ENCODE measurements at regions of chr7 and their contacts with region 1.

Region 1: GRCh38 chr7:22559829-22560489 is 60.0 kb upstream of the STEAP1B start:
- DNase-seq: no peak
- H3K4me3 ChIP-seq: no peak overlapping the region
- H3K27ac ChIP-seq: no peak overlapping the region
- H3K4me1 ChIP-seq: peaks cover 29 to 53% (median 46%) of the 10 kb centered on the region in 6 donors
- H3K27me3 ChIP-seq: peaks cover 0 to 23% (median 0%) of the 10 kb centered on the region in 7 donors
- CTCF ChIP-seq: peak; percentile 78 to 98 (median 84)
- POLR2A ChIP-seq: no peak

Region 2: DNA sequence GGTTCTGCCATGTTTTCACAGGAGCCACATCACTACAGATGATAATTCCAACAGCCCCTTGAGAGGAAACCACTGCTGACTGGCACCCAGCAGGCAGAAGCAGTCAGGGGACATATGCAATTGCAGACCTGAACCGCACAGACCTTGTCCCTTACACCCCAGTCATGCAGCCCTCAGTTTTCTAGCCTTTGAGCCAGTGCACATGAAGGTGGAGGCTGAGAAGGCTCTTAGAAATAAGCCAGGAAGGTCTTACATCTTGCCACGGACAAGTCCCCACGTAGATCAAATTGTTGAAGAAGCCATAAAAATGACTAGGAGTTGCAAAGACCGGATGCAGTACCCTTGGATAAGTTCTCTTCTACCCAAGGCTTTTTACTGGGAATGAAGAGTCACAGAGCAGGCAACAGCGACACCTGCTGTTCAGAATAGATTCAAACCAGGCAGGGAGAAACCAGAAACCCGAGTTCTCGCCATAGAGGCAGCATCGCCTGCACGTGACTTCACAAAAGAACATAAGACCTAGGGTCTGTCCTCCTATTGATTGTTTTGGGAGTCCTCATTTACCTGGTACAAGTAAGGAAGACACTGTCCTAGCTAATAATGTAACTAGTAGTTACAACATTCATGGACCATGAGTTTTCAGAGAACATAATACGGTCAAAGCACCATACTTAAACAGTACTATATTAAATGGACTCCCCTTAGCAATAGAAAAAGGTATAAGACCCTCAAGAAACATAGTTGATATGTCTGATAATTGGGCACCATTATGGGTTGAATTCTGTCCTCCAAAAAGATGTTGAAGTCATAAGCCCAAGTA is 71.1 kb before region 1 on chr7:
- intact Hi-C with region 1: no loop called
- DNase-seq: no peak
- H3K4me3 ChIP-seq: no peak overlapping the region
- H3K27ac ChIP-seq: peak overlapping the region in 5 of 8 donors; percentile 26 to 58 (median 53)
- H3K4me1 ChIP-seq: peaks cover 0 to 9% (median 4%) of the 10 kb centered on the region in 6 donors
- H3K27me3 ChIP-seq: peaks cover 0 to 4% (median 0%) of the 10 kb centered on the region in 7 donors
- CTCF ChIP-seq: peak; percentile 54 to 94 (median 88)
- POLR2A ChIP-seq: no peak

Region 3: GRCh38 chr7:22607180-22607579 is 47.2 kb after region 1 on chr7:
- intact Hi-C with region 1: no loop called
- DNase-seq: no peak
- H3K4me3 ChIP-seq: no peak overlapping the region
- H3K27ac ChIP-seq: no peak overlapping the region
- H3K4me1 ChIP-seq: peaks cover 0 to 1% (median 0%) of the 10 kb centered on the region in 6 donors
- H3K27me3 ChIP-seq: no peaks in the 10 kb centered on the region
- CTCF ChIP-seq: no peak
- POLR2A ChIP-seq: no peak

Region 4: DNA sequence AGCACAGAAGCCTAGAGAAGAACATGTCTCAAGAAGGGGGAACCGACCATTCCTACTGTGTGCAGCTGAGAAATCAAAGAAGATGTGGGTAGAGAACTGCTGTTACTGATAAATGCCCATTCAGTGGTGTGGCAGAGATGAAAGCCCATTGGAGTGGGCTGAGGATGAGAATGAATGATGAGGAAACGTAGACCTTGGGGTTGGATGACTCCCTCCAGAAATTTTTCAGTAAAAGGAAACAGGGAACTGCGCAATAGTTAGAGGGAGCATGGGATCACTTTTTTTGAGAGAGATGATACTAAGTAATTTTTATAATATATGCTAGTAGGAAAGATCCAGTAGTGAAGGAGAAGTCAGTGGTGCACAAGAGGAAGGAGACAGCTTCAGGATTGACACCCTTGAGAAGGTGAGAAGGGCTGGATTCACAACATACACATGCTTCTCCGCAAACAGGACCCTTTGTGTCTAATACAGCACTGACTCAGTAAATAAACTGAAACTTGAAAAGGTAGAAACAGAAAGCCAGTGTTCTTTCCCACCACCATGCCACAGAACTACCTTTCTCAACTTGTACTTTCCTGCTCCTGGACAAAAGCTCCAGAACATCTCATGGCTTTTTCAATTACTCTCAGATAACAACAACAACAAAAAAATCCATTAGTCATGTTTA is 62.3 kb after region 1 on chr7:
- intact Hi-C with region 1: no loop called
- DNase-seq: no peak
- H3K4me3 ChIP-seq: no peak overlapping the region
- H3K27ac ChIP-seq: no peak overlapping the region
- H3K4me1 ChIP-seq: no peaks in the 10 kb centered on the region
- H3K27me3 ChIP-seq: no peaks in the 10 kb centered on the region
- CTCF ChIP-seq: no peak
- POLR2A ChIP-seq: no peak

Region 5: GRCh38 chr7:22726345-22727185 is 166.6 kb after region 1 on chr7:
- intact Hi-C with region 1: loop called (anchors 5 kb)
- DNase-seq: peak; percentile 84
- H3K4me3 ChIP-seq: peak overlapping the region; percentile 26 to 61 (median 36)
- H3K27ac ChIP-seq: peak overlapping the region; percentile 11 to 89 (median 76)
- H3K4me1 ChIP-seq: peaks cover 32 to 98% (median 68%) of the 10 kb centered on the region in 6 donors
- H3K27me3 ChIP-seq: peaks cover 0 to 25% (median 3%) of the 10 kb centered on the region in 7 donors
- CTCF ChIP-seq: peak in 10 of 11 experiments; percentile 39 to 72 (median 58)
- POLR2A ChIP-seq: peak in 1 of 3 donors; percentile 7

Region 6: DNA sequence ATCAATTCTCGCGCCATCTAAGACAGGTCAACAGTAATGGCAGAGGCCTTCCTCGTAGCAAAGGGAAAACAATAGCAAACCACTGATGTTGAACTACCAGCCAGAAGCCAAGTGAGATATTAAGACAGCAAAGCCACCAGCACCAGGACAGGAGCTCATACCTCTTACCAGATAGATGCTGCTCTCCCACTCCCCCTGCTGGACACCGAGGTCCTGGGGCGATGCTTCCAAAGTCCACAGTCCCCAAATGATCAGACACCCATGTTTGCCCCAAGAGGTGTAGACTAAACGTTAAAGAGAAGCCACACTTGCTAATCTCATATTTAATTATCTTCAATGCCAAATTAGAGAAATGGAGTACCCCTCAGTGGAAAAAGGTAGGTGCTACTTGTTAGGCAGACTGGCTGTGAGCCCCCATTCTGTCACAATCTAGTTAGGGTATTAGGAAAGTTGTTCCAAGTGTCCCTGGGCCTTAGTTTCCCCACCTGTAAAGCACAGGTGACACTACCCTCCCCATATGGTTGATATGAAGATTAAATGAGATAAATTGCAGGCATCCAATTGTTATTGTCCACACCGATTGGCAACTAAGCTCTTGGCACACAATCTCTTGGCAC is 222.8 kb after region 1 on chr7:
- intact Hi-C with region 1: loop called (anchors 2 kb)
- DNase-seq: peak; percentile 87
- H3K4me3 ChIP-seq: no peak overlapping the region
- H3K27ac ChIP-seq: no peak overlapping the region
- H3K4me1 ChIP-seq: peaks cover 0 to 3% (median 0%) of the 10 kb centered on the region in 6 donors
- H3K27me3 ChIP-seq: no peaks in the 10 kb centered on the region
- CTCF ChIP-seq: peak; percentile 20 to 85 (median 79)
- POLR2A ChIP-seq: no peak

Region 7: DNA sequence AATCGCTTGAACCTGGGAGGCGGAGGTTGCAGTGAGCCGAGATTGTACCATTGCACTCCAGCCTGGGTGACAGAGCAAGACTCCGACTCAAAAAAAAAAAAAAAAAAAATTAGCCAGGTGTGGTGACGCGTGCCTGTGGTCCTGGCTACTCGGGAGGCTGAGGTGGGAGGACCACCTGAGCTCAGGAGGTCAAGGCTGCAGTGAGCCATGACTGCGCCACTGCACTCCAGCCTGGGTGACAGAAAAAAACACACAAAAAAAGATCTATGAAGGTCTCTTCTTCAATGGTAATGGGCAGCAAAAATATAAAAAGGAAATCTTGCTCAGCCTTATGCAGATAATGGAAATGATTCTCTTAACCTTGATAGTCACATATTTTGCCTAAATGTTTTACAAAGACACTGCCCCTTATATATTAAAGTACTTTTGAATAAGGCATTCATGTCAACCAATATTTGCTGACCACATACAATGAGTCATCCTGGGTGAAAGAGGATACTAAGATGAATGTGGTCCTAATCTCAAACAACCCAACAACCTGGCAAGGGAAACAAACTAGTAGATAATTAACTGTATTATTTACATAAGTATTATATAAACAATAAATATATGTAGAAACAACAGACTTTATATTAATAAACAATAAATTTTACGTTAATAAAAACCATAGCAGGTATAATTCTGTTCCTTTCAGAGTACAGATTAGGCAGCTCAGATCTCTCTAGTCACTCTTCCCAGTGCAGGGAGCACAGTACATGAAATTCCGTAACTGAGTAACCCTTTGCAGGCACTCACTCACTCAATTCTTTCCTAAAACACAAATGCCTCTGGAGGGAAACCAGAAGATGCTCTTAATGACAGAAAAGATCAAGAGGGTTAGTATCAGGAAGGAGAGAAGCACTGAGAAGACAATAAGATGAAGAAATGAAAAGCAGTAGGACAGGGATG is 254.6 kb after region 1 on chr7:
- intact Hi-C with region 1: no loop called
- DNase-seq: no peak
- H3K4me3 ChIP-seq: no peak overlapping the region
- H3K27ac ChIP-seq: no peak overlapping the region
- H3K4me1 ChIP-seq: peaks cover 0 to 47% (median 10%) of the 10 kb centered on the region in 6 donors
- H3K27me3 ChIP-seq: no peaks in the 10 kb centered on the region
- CTCF ChIP-seq: no peak
- POLR2A ChIP-seq: no peak

Region 8: DNA sequence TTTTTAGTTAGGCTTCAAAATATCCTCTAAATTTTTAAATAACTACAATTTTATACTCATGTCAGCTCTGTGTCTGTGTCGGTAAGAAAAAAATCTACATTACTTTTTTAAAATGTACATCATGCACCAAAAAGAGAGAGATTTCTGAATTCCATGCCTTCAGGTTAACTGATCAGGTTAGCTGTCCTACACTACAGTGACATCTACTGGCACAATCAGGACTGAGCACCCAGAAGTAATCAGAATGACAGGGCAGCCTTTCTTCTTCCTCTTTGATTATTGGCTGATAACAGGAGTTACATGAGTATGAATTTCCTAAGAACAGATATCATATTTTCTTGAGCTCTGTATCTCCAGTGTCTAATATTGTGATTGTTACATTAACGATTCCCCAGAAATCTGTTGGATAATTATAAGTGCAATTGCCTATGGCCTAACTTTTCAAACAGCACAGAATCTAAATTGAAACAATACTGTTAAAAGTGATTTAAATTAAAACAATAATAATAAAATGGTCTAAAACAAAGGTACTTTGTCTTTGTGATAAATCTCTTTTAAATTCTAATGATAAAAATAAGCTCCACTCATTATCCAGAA is 495.7 kb after region 1 on chr7:
- intact Hi-C with region 1: loop called (anchors 10 kb)
- DNase-seq: no peak
- H3K4me3 ChIP-seq: no peak overlapping the region
- H3K27ac ChIP-seq: no peak overlapping the region
- H3K4me1 ChIP-seq: peaks cover 0 to 10% (median 0%) of the 10 kb centered on the region in 6 donors
- H3K27me3 ChIP-seq: no peaks in the 10 kb centered on the region
- CTCF ChIP-seq: peak; percentile 68 to 90 (median 84)
- POLR2A ChIP-seq: no peak

Measured in spleen (tissue), 13 donors.